A549 (cell line): ENCODE measurements at regions of chr15 and their contacts with region 1.

Region 1: DNA sequence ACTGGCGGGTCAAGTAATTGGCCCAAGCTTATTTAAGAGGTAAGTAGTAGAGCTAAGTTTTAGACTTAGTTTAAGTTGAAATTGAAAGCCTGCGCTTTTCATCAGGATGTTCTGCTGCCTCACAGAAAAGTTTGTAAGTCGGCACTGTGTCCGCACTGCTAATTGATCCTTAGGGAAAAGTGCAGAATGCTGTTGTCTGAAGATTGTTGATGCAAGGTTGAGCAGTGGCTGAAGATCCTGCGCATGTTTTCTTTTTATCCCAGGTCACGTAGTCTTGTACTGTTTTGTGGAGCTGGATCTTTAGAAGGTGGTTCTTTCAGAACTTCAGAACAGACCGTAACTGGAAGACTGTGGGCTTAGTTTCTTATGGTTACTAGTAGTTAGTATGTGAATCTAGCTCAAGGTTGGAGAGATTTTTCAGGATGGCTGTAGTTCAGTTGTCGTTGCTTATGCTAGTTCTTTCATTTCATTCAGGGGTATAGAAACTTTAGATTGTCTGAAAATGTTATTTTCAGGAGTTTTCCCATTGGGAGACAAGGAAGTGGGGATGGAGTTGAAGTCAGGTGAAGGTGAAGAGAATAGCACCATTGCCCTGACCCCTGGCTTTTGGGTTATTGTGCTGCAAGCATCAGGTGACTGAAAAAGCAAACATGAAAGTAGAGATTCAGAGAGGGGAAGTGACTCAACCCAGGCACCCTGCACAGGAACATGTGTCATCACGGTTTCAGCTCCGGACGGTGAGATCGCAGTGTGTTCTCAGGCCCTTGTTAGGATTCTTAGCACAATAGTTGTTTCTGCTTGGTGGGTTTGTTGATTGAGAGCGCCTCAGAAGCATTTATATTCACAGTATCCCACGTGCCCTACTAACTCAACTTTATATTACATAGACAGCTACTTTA is 32.8 kb downstream of the AKAP13 start:
- DNase-seq: peak; percentile 93 to 98
- ATAC-seq: peak; percentile 96 to 99
- H3K4me3 ChIP-seq: peak overlapping the region; percentile 16
- H3K27ac ChIP-seq: peak overlapping the region; percentile 80 to 81
- H3K4me1 ChIP-seq: peaks cover 64% of the 10 kb centered on the region
- CTCF ChIP-seq: no peak
- EP300 ChIP-seq: peak; percentile 47 to 63; a peak in 2 of 5 replicates
- POLR2A ChIP-seq: no peak
- RAD21 ChIP-seq: peak in 1 of 2 experiments; percentile 45; a peak in 3 of 5 replicates

Region 2: GRCh38 chr15:85289677-85290365 is 123.4 kb before region 1 on chr15:
- CTCF ChIA-PET with region 1: interaction called, 147 read pairs
- POLR2A ChIA-PET with region 1: no interaction called
- DNase-seq: peak; percentile 71 to 96
- ATAC-seq: peak; percentile 85 to 89
- H3K4me3 ChIP-seq: no peak overlapping the region
- H3K27ac ChIP-seq: no peak overlapping the region
- H3K4me1 ChIP-seq: peaks cover 6% of the 10 kb centered on the region; the same call in 1 of the 3 replicates
- CTCF ChIP-seq: peak; percentile 87
- EP300 ChIP-seq: no peak
- POLR2A ChIP-seq: no peak
- RAD21 ChIP-seq: peak; percentile 83 to 88

Region 3: GRCh38 chr15:85312486-85312885 is 100.7 kb before region 1 on chr15:
- CTCF ChIA-PET with region 1: interaction called, 22 read pairs
- POLR2A ChIA-PET with region 1: no interaction called
- DNase-seq: no peak
- ATAC-seq: peak; percentile 37 to 61; a peak in 4 of 6 replicates
- H3K4me3 ChIP-seq: no peak overlapping the region
- H3K27ac ChIP-seq: peak overlapping the region in 1 of 2 experiments; percentile 7; a peak in 2 of 6 replicates
- H3K4me1 ChIP-seq: peaks cover 19% of the 10 kb centered on the region
- CTCF ChIP-seq: no peak
- EP300 ChIP-seq: no peak
- POLR2A ChIP-seq: no peak
- RAD21 ChIP-seq: no peak

Region 4: DNA sequence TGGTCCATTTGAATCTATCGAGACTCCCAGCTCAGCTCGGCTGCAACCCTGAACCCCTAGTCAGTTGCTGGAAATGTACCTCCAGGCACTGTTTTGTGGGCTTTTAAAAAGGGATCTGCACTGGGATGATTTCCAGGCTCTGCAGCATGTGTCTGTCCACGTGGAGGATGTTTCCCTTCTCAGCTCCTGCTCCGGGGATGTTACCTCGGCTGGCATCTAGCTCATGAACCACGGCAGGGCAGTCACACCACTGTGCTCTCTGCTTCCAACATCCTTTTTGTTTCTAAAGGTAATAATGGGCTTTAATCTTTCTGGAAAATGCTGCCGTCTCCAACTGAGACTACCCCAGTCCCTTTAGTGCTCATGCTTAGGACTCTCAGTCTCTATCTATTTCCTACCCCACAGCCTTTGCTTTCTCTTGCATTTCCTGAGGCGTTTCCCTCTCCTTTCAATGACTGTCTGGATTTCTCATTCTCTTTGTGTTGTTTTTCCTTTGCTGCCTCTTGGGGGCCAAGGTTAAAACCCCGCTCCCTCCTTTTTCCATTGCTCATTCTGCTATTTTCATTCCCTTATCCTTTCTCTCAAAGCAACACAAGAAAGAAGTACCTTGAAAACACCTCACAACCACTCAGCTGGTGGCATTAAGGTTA is 75.7 kb before region 1 on chr15:
- CTCF ChIA-PET with region 1: interaction called, 247 read pairs
- POLR2A ChIA-PET with region 1: no interaction called
- DNase-seq: no peak
- ATAC-seq: peak in 1 of 2 experiments; percentile 39; a peak in 3 of 6 replicates
- H3K4me3 ChIP-seq: no peak overlapping the region
- H3K27ac ChIP-seq: peak overlapping the region; percentile 42 to 49; a peak in 5 of 6 replicates
- H3K4me1 ChIP-seq: peaks cover 17% of the 10 kb centered on the region
- CTCF ChIP-seq: no peak
- EP300 ChIP-seq: no peak
- POLR2A ChIP-seq: no peak
- RAD21 ChIP-seq: no peak

Region 5: DNA sequence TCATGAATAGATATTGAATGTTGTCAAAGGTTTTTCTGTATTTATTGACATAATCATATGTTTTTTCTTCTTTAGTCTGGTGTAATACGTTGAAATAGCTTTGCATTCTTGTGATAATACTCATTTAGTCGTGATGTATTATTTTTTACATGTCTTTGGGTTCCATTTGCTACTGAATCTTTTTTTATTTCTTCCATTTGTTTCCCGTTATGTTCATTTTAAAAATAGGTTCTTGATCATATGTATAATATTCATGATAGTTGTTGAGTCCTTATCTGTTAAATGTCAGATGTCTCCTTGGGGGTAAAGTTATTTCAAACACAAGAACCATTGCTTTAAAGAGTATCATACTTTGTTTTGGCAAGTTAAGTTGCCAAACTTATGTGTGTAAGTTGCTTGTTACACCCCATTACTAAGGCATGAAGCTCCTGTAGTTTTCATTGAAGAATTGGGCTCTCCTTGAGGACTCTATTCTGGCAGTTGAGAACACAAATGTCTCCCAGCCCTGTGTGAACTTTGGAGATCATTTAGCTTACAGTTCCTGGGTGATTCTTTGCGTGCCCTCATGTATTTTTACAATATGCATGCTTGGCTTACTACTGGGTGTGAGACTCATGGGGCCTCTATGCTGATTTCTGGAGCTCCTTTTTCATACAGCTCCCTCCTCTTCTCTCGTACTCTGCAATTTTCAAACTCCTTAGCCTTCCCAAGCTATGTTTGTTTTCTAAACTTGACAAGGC is 24.5 kb before region 1 on chr15:
- CTCF ChIA-PET with region 1: interaction called, 19 read pairs
- POLR2A ChIA-PET with region 1: no interaction called
- DNase-seq: no peak
- ATAC-seq: no peak
- H3K4me3 ChIP-seq: no peak overlapping the region
- H3K27ac ChIP-seq: no peak overlapping the region
- H3K4me1 ChIP-seq: peaks cover 40% of the 10 kb centered on the region
- CTCF ChIP-seq: no peak
- EP300 ChIP-seq: no peak
- POLR2A ChIP-seq: no peak
- RAD21 ChIP-seq: no peak

Region 6: GRCh38 chr15:85423256-85423655 is 10.1 kb after region 1 on chr15:
- CTCF ChIA-PET with region 1: interaction called, 18 read pairs
- POLR2A ChIA-PET with region 1: no interaction called
- DNase-seq: no peak
- ATAC-seq: no peak
- H3K4me3 ChIP-seq: no peak overlapping the region
- H3K27ac ChIP-seq: no peak overlapping the region
- H3K4me1 ChIP-seq: peaks cover 43% of the 10 kb centered on the region
- CTCF ChIP-seq: no peak
- EP300 ChIP-seq: no peak
- POLR2A ChIP-seq: no peak
- RAD21 ChIP-seq: no peak

Region 7: DNA sequence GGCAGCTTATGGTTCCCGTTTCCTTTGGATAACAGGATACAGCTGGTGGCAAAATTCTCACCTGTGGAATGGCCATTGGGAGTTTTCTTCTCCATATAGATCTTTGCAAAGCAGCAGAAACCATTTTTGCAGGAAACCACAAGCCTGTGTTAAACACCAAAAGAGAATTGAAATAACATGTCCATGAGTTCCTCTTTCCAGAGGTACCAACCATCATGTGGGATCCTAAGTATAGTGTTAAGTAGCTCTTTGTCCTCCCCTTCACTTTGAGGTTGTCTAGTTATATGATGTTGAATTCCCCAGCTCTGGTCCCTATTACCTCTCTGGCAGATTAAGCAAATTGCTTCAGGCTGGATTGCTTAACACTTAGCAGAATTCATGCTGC is 62.1 kb after region 1 on chr15:
- CTCF ChIA-PET with region 1: interaction called, 18 read pairs
- POLR2A ChIA-PET with region 1: no interaction called
- DNase-seq: no peak
- ATAC-seq: no peak
- H3K4me3 ChIP-seq: no peak overlapping the region
- H3K27ac ChIP-seq: no peak overlapping the region
- H3K4me1 ChIP-seq: peaks cover 67% of the 10 kb centered on the region
- CTCF ChIP-seq: no peak
- EP300 ChIP-seq: no peak
- POLR2A ChIP-seq: no peak
- RAD21 ChIP-seq: no peak

Region 8: DNA sequence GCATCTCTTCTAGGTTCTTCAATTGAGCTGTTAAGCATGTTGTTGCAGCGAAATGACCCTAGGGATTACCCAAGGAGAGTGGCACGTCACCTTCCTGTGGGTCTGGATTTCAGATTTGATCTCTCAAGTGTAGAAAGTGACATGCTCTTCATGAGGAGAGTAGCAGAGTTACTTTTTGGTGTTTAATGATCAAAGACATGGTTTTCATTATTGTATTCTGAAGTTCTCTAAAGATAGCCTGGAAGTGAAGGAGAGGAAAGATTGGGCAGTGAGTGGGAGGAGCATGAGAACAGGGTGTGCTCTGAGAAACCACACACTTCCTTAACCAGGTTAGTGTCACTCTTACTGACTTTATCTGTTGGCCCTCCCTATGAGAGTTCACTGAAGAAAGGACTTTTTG is 120.8 kb after region 1 on chr15:
- CTCF ChIA-PET with region 1: no interaction called
- POLR2A ChIA-PET with region 1: no interaction called
- DNase-seq: no peak
- ATAC-seq: no peak
- H3K4me3 ChIP-seq: no peak overlapping the region
- H3K27ac ChIP-seq: no peak overlapping the region
- H3K4me1 ChIP-seq: no peaks in the 10 kb centered on the region; the same call in 2 of the 3 replicates
- CTCF ChIP-seq: no peak
- EP300 ChIP-seq: no peak
- POLR2A ChIP-seq: no peak
- RAD21 ChIP-seq: no peak

Region 9: DNA sequence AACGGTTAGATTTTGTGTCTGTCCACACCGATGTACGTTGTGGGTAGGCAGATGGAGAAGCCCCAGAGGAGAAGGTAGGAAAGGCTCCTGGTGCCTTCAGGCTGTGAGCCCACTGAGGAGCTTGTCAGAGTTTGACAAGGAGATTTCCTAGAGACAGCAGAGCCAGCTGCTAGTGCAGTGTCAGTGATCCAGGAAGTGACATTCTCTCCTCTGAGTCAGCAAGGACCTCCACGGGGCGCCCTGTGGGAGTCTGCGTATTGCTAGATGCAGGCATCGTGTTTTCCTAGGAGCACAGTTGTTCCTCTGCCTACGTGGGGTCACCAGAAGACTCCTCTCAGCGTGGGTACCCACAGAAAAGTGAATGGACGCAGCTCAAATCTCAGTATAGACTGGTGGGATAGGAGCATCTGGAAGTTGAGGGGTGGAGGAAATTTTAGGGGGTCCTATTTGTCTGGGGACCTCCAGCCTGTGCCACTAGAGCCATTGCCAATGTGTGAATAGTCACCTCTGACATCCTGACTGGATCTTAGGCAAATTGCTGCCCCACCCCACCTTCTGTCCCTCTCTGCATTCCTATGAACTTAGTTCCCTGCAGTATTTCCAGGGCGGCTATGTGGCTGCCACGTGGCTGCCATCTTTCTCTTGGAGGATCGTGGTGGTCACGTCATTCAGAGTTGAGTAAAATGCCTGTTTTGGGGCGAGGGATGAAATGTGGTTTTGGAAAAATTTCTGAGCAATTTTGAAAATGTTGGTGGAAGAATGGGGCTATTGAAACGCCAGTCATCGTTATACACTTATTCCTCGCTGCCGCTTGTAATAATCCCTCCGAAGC is 466.3 kb after region 1 on chr15:
- CTCF ChIA-PET with region 1: no interaction called
- POLR2A ChIA-PET with region 1: no interaction called
- DNase-seq: peak in 1 of 2 experiments; percentile 28
- ATAC-seq: peak; percentile 71 to 76; a peak in 5 of 6 replicates
- H3K4me3 ChIP-seq: no peak overlapping the region
- H3K27ac ChIP-seq: no peak overlapping the region
- H3K4me1 ChIP-seq: no peaks in the 10 kb centered on the region
- CTCF ChIP-seq: no peak
- EP300 ChIP-seq: no peak
- POLR2A ChIP-seq: no peak
- RAD21 ChIP-seq: no peak